GM10248 (cell line): ENCODE measurements at regions of chr2 and their contacts with region 1.

Region 1: DNA sequence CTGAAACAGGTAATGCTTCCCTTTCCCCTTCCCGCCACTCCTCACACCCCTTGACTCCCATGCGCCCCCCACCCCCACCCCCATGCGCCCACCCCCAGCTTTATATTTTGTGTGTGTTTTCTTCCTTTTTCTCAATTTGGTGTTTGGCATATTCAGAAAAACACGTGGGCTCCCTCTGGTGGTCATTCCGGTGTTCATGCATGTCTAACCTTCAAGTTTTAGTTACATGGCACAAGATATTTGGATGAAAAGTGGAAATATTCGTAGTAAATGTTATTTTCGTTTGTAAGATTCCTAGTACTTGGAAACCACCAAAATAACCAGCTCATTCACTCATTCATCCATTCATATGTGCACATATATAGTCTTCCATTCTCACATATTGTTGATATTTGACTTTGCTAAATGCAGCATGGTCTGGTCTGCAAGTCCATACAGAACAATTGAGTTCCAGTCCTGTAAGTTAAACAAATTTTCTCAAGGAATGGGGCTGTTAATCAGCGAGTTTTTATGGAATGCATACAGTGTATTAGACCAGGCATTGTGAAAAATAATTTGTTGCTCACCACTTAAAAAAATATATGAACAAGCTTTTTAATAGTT is 143.6 kb upstream of the MAP3K20 start:
- DNase-seq: peak; percentile 45
- CTCF ChIP-seq: peak; percentile 88

Region 2: GRCh38 chr2:172806493-172806892 is 125.5 kb before region 1 on chr2:
- CTCF ChIA-PET with region 1: interaction called, 69 read pairs
- POLR2A ChIA-PET with region 1: no interaction called
- DNase-seq: peak; percentile 26
- CTCF ChIP-seq: peak; percentile 80

Region 3: GRCh38 chr2:172864182-172864581 is 67.8 kb before region 1 on chr2:
- CTCF ChIA-PET with region 1: interaction called, 42 read pairs
- POLR2A ChIA-PET with region 1: no interaction called
- DNase-seq: peak; percentile 52
- CTCF ChIP-seq: peak; percentile 60

Region 4: DNA sequence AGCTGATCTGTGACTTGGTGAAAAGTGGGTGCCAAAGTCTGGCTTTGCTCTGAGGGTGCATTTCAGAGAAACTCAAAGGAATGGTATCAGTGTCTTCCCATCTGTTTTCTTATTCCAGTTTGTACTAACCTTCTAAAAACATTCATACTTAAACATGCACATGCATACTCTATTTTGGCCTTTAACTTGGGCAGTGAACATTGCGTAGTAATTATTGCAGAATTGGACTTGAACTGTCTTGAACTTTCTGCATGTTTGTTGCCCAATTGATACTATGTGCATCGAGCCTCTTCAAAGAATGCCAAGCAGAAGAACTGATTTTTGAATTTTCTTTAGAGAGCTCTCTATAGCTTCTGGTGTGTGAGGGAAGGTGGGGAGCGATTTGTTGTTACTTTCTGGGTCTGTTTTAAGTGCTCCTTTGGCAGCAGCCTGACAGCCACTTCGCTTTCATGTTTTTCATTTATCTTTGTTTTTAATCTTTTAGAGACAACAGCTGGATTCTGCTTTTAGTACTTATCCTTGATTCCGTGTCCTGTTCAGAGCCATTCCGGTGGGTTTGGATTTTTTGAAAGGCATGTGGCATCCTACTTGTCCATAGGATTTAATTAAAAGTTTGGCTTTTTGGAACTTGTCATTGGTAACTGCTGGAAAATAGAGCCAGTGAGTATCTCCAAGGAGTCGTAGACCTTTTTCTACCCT is 37.2 kb before region 1 on chr2:
- CTCF ChIA-PET with region 1: interaction called, 15 read pairs
- POLR2A ChIA-PET with region 1: no interaction called
- DNase-seq: no peak
- CTCF ChIP-seq: no peak

Region 5: DNA sequence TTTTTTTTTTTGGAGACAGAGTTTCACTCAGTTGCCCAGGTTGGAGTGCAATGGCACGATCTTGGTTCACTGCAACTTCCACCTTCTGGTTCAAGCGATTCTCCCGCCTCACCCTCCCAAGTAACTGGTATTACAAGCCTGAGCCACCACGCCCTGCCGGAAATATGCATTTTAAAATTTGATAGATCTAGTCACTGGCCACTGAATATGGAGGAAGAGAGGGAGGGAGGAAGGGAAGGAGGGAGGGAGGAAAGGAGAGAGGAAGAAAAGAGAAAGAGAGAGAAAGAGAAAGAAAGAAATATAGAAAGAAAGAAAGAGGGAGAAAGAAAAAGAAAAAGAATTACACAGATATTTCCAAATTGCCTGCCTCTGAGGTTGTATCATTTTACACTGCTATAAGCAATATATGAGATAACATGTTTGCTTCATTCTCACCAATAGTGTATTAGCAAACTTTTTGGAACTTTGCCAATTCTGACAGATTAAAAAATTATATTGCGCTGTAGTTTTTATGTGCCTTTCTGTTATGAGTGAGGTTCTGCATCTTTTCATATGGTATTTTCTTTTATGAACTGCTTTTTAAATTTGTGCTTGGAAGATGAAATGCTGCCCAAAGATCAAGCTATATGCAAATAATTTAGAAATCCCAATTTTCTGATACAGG is 17.5 kb before region 1 on chr2:
- CTCF ChIA-PET with region 1: interaction called, 27 read pairs
- POLR2A ChIA-PET with region 1: no interaction called
- DNase-seq: no peak
- CTCF ChIP-seq: no peak

Region 6: DNA sequence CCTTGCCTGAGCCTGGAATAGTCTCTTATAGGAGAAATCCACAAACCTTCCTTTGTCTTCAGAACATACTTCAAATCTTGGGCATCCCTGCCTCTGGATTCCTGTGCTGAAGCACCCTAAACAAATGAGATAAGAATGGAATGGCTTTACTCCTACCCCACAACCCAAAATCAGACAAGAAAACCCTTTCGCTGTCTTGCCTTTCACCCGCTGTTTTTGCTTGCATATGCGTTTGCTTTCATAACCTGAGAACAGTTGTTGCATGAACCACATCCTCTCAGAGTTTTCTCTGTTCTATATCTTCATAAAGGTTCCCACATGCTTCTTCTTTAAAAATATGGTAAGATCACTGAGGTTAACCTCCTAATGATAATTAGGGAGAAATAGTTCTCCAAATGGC is 11.5 kb after region 1 on chr2:
- CTCF ChIA-PET with region 1: interaction called, 16 read pairs
- POLR2A ChIA-PET with region 1: no interaction called
- DNase-seq: no peak
- CTCF ChIP-seq: no peak